ENCODE measurements at regions of chr11 and their contacts with region 1.

Region 1: DNA sequence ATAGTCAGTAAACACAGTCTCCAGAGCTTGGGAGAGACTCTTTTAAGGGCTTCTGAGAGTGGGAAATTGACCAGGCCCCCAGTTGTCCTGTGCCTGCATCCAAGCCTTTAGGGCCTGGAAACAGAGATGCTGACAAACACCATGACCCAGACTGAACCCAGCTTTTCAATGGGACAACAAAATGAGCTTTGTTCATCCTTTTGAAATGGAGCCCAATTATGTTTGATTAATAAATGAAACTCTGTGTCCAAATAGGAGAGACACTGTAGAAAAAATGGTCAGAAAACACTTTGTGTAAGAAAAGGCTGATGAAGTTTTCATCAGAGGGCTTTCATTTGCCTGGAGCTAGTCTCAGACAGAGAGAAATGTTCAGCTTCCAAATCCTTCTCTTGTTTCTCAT is 146.0 kb downstream of the RRAS2 start:
- DNase-seq: no peak
- ATAC-seq: no peak
- H3K4me3 ChIP-seq: no peak overlapping the region
- H3K27ac ChIP-seq: no peak overlapping the region
- H3K4me1 ChIP-seq: no peaks in the 10 kb centered on the region
- H3K27me3 ChIP-seq: peaks cover 34% of the 10 kb centered on the region
- CTCF ChIP-seq: no peak

Region 2: DNA sequence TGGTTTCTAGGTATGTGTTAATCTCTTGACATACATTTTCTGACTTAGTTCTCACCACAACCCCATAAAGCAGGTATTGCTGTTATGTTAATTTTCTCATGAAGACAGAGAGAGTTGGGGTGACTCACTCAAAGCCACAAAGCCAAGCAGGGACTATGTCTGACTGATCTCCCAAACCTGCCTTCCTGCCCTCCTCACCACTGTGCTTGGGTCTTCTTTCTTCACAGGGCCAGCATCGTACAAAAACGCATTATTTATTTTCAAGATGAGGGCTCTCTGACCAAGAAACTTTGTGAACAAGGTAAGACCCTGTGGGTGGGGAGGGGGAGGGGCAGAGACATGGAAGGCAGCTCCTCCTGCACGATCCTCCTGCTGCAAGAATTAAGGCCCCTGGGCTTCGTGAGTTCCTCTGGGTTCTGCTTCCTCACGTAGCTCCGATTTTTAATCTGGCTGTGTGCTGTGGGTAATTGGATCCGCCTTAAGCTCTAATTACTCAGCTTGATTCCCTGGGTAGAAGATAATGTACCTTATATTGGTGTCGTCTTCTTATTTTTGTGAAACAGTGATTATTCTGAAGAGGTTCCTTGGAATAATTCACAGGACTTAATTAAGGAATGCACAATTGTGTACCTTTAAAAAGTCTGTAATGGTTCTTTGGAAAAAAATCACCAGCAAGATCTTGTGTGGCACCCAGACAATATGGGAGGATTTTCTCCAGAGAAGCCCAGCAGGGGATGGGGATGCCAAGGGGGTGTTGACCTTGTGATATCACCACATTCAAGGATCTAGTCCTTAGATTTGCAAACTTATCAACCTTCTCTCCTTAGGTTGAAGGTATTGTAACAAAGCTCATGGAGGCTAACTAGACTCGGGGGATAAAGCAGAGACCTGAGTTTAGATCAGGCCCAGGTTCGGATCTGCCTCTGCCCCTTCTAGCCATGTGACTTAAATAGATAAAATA is 137.6 kb before region 1 on chr11:
- CTCF ChIA-PET with region 1: no interaction called
- POLR2A ChIA-PET with region 1: no interaction called
- intact Hi-C with region 1: loop called (anchors 5 kb)
- DNase-seq: peak; percentile 24
- ATAC-seq: 0 out of 2 replicates have a peak, but pooled peaks have one; percentile 24
- H3K4me3 ChIP-seq: no peak overlapping the region
- H3K27ac ChIP-seq: no peak overlapping the region
- H3K4me1 ChIP-seq: no peaks in the 10 kb centered on the region
- H3K27me3 ChIP-seq: peaks cover 28% of the 10 kb centered on the region
- CTCF ChIP-seq: no peak

Region 3: GRCh38 chr11:14179126-14179820 is 33.7 kb before region 1 on chr11:
- CTCF ChIA-PET with region 1: no interaction called
- POLR2A ChIA-PET with region 1: no interaction called
- intact Hi-C with region 1: no loop called
- DNase-seq: no peak
- ATAC-seq: no peak
- H3K4me3 ChIP-seq: no peak overlapping the region
- H3K27ac ChIP-seq: no peak overlapping the region
- H3K4me1 ChIP-seq: no peaks in the 10 kb centered on the region
- H3K27me3 ChIP-seq: peaks cover 3% of the 10 kb centered on the region; the same call in 1 of the 2 replicates
- CTCF ChIP-seq: no peak

Measured in PC-3 (cell line).